Psoas muscle (tissue), 8 donors: ENCODE measurements at regions of chr18 and their contacts with region 1.

Region 1: GRCh38 chr18:8901019-8901418 is 195.7 kb downstream of the MTCL1 start:
- DNase-seq: no peak
- ATAC-seq: no peak
- H3K4me3 ChIP-seq: no peak overlapping the region
- H3K27ac ChIP-seq: no peak overlapping the region
- H3K4me1 ChIP-seq: no peaks in the 10 kb centered on the region
- H3K27me3 ChIP-seq: peaks cover 0 to 1% (median 0%) of the 10 kb centered on the region in 3 donors
- CTCF ChIP-seq: no peak

Region 2: DNA sequence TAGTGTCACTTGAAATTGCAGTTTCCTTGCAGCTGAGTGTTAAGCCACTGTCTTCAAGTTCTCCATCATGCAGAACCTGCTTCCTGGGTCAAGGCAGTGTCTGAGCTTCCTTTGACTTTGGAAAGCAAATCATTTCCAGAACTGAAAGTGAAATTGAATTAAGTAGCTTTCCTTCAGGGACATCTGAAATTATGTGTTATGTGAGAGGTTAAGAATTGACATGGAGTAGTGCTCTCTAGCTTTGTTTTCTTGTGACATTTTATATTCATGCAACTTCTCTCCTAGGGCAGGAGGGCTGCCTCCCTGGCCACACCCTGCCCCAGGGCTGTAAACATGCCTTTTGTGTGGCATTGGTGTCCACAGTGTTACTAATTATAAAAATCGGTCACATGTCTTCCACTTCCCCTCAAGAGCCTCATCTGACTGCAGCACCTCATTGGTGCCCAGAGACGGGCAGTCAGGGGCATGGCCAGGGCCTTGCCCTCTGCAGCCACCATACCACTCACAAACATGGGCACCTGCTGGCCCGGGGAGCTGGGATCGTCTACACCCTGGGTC is 277.4 kb before region 1 on chr18:
- intact Hi-C with region 1: no loop called
- DNase-seq: peak in 1 of 2 donors; percentile 62
- ATAC-seq: peak; percentile 69 to 92 (median 84)
- H3K4me3 ChIP-seq: peak overlapping the region; percentile 46
- H3K27ac ChIP-seq: peak overlapping the region; percentile 85
- H3K4me1 ChIP-seq: peaks cover 79% of the 10 kb centered on the region
- H3K27me3 ChIP-seq: no peaks in the 10 kb centered on the region
- CTCF ChIP-seq: no peak

Region 3: GRCh38 chr18:8951491-8951890 is 50.5 kb after region 1 on chr18:
- intact Hi-C with region 1: loop called in 1 of 2 experiments (anchors 10 kb)
- DNase-seq: no peak
- ATAC-seq: no peak
- H3K4me3 ChIP-seq: no peak overlapping the region
- H3K27ac ChIP-seq: no peak overlapping the region
- H3K4me1 ChIP-seq: no peaks in the 10 kb centered on the region
- H3K27me3 ChIP-seq: peaks cover 0 to 17% (median 0%) of the 10 kb centered on the region in 3 donors
- CTCF ChIP-seq: no peak

Region 4: GRCh38 chr18:8998481-8999217 is 97.6 kb after region 1 on chr18:
- intact Hi-C with region 1: no loop called
- DNase-seq: no peak
- ATAC-seq: peak in 2 of 4 donors; percentile 35 to 55
- H3K4me3 ChIP-seq: no peak overlapping the region
- H3K27ac ChIP-seq: no peak overlapping the region
- H3K4me1 ChIP-seq: peaks cover 28% of the 10 kb centered on the region
- H3K27me3 ChIP-seq: no peaks in the 10 kb centered on the region
- CTCF ChIP-seq: no peak

Region 5: GRCh38 chr18:9136315-9137155 is 235.5 kb after region 1 on chr18 and contains the start of gene ANKRD12:
- intact Hi-C with region 1: no loop called
- DNase-seq: peak; percentile 97 to 99
- ATAC-seq: peak; percentile 91 to 96 (median 94)
- H3K4me3 ChIP-seq: peak within 1 kb of the TSS; percentile 88
- H3K27ac ChIP-seq: peak within 1 kb of the TSS; percentile 99
- H3K4me1 ChIP-seq: peaks cover 45% of the 10 kb centered on the region
- H3K27me3 ChIP-seq: no peaks in the 10 kb centered on the region
- CTCF ChIP-seq: no peak
- total RNA-seq, gene ANKRD12: 36.7 to 49.0 (median 44.4) TPM